Activated naive CD4-positive, alpha-beta T cell treated with anti-CD3 and anti-CD28 coated beads for 36 hours (primary cell): ENCODE measurements at regions of chr12 and their contacts with region 1.

Region 1: GRCh38 chr12:66144791-66145754 is 14.5 kb upstream of the LLPH start:
- DNase-seq: peak; percentile 49
- H3K4me3 Mint-ChIP-seq: no peak overlapping the region
- H3K27ac Mint-ChIP-seq: peak overlapping the region; percentile 86
- H3K4me1 Mint-ChIP-seq: peaks cover 16% of the 10 kb centered on the region
- H3K27me3 Mint-ChIP-seq: no peaks in the 10 kb centered on the region

Region 2: GRCh38 chr12:66235626-66236281 is 90.7 kb after region 1 on chr12:
- CTCF ChIA-PET with region 1: no interaction called
- intact Hi-C with region 1: loop called (anchors 1 kb)
- DNase-seq: no peak
- H3K4me3 Mint-ChIP-seq: peak overlapping the region; percentile 55
- H3K27ac Mint-ChIP-seq: no peak overlapping the region
- H3K4me1 Mint-ChIP-seq: peaks cover 4% of the 10 kb centered on the region
- H3K27me3 Mint-ChIP-seq: peaks cover 35% of the 10 kb centered on the region

Region 3: DNA sequence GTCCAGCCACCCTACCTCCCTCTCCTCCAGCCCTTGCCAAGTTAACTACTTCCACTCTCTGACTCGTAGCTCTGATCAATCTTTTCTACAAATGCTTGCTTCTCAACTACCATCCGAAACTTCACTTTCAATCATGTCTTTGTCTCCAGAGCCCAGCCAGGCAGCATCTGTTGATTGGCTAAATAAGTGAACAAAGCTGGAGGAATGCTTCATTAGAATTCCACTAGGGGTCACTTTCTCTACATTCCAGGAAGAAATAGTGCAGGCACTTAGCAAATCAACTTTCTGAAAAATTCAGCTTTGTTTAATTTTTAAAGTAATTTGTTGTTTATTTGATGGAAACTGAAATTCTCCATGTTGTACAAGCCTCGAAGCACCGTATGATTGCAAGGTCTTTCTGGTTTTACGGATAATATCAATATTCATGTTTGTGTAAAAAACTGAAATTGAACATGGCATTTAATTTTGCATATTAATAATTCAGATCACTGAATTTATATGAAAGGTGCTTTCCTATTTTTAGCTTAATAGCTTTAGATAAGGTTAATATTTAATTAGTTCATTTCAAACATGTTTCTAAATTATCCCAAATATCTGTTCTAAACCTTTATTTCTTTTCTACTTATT is 124.8 kb after region 1 on chr12:
- CTCF ChIA-PET with region 1: interaction called, 5 read pairs
- intact Hi-C with region 1: loop called (anchors 1 kb)
- DNase-seq: peak; percentile 52
- H3K4me3 Mint-ChIP-seq: no peak overlapping the region
- H3K27ac Mint-ChIP-seq: no peak overlapping the region
- H3K4me1 Mint-ChIP-seq: peaks cover 5% of the 10 kb centered on the region
- H3K27me3 Mint-ChIP-seq: peaks cover 3% of the 10 kb centered on the region

Region 4: GRCh38 chr12:66693901-66694675 is 549.0 kb after region 1 on chr12:
- CTCF ChIA-PET with region 1: interaction called, 5 read pairs
- intact Hi-C with region 1: loop called (anchors 1 kb)
- DNase-seq: peak; percentile 41
- H3K4me3 Mint-ChIP-seq: no peak overlapping the region
- H3K27ac Mint-ChIP-seq: no peak overlapping the region
- H3K4me1 Mint-ChIP-seq: peaks cover 13% of the 10 kb centered on the region
- H3K27me3 Mint-ChIP-seq: no peaks in the 10 kb centered on the region

Region 5: GRCh38 chr12:66708704-66709456 is 563.8 kb after region 1 on chr12:
- CTCF ChIA-PET with region 1: no interaction called
- intact Hi-C with region 1: loop called (anchors 5 kb)
- DNase-seq: no peak
- H3K4me3 Mint-ChIP-seq: peak overlapping the region; percentile 32
- H3K27ac Mint-ChIP-seq: peak overlapping the region; percentile 7
- H3K4me1 Mint-ChIP-seq: peaks cover 33% of the 10 kb centered on the region
- H3K27me3 Mint-ChIP-seq: no peaks in the 10 kb centered on the region